Common myeloid progenitor, CD34-positive (primary cell): ENCODE measurements at regions of chr19 and their contacts with region 1.

Region 1: DNA sequence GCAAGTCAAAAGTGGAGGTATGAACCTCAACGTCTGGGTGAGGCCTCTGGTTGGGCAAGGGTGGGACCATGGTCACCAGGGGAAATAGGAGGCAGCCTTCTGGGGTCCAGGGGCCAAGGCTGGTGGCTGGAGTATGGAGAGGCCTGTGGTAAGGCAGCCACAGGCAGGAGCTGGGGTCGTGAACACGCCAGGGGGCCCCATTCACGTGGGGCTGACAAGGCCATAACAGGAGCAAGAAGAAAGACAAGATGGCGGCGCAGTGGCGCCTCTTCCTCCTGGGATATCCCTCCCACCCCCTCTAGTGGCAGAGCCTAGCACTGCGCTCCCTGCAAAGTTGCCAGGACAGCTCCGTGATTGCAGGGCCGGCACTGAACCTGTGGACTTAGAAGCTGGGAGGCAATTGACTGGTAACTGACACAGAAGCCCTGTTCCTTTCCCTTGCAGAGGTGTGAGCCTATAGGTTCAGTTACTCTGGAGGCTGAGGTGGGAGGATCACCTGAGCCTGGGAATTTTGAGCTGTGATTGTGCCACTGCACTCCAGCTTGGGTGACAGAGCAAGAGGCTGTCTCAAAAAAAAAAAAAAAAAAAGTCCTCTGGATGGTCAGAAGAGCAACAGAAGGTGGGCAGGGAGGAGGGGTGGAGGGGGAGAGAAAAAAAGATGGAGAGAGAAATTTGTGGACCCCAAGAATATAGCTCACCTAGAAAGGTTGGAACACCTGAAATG is 19.7 kb upstream of the EDDM13 start:
- DNase-seq: peak; percentile 85 to 91 (median 90)
- H3K4me3 ChIP-seq: peak overlapping the region in 1 of 7 experiments; percentile 7
- H3K27ac ChIP-seq: no peak overlapping the region
- H3K4me1 ChIP-seq: no peaks in the 10 kb centered on the region
- H3K27me3 ChIP-seq: no peaks in the 10 kb centered on the region

Region 2: DNA sequence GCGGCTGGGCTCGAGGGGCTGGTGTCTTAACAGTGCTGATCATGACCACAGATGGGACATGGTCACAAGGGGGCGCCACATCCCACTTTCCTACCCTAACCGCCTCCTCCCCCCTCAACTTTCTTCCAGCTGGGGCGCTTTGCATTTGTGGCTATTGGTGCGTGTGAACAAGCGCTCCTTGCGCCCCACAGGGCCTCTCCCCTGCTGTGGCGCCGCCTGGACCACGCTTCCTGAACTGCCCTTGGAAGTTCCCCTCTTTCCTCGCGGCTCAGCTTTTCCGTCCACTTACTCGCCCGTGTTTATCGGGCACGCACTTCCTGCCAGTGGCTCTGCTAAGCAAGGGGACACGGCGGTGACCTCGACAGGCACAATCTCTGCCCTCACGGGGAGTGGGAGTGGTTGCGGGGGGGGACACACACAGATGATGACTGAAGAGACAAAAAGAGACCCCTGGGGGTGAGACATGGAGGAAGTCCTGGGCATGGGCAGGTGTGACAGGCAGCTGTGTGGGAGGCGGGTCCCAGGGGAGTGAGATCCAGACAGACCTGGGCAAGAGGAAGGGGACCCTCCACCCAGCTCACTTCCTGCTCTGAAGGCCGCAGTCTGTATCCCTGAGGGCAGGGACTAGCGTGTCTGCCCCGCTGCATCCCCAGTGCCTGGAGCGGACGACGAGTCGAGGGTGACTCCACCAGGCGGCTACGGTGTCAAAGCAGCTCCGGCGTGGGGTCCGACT is 172.0 kb before region 1 on chr19:
- CTCF ChIA-PET with region 1: interaction called, 33 read pairs
- POLR2A ChIA-PET with region 1: no interaction called
- DNase-seq: peak; percentile 77 to 90 (median 89)
- H3K4me3 ChIP-seq: peak overlapping the region; percentile 11 to 63 (median 50)
- H3K27ac ChIP-seq: no peak overlapping the region
- H3K4me1 ChIP-seq: peaks cover 0 to 12% (median 10%) of the 10 kb centered on the region in 4 experiments
- H3K27me3 ChIP-seq: peaks cover 0 to 5% (median 0%) of the 10 kb centered on the region in 5 experiments

Region 3: GRCh38 chr19:56155124-56155687 is 97.7 kb before region 1 on chr19:
- CTCF ChIA-PET with region 1: interaction called, 32 read pairs
- POLR2A ChIA-PET with region 1: no interaction called
- DNase-seq: peak in 2 of 3 donors; percentile 25 to 32
- H3K4me3 ChIP-seq: no peak overlapping the region
- H3K27ac ChIP-seq: no peak overlapping the region
- H3K4me1 ChIP-seq: peaks cover 0 to 13% (median 7%) of the 10 kb centered on the region in 4 experiments
- H3K27me3 ChIP-seq: no peaks in the 10 kb centered on the region

Region 4: DNA sequence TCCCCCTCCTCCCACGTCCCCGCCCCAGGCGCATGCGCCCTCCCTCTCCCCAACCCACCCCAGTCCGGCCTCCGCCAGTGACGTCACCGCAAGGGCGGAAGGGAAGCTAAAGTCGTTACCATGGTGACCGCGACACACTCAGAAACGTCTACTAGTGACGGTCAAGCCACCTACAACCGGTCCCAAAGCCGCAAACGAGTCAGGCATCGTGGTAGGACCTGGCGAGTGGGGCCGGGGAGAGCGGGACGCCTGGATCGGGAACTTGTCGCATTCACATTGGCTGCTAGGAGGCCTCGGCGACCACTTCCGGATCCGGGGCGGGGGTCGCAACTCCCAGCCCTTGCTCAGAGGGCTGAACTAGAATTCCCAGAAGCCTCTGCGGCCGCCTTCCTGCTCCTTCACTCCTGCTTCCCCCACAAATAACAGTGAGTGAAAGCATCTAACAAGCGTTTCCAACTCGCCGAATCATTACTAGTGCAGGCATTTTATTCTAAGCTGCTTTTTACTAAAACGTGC is 61.8 kb after region 1 on chr19 and contains the start of gene ZSCAN5A:
- CTCF ChIA-PET with region 1: interaction called, 21 read pairs
- POLR2A ChIA-PET with region 1: no interaction called
- DNase-seq: peak; percentile 97
- H3K4me3 ChIP-seq: peak within 1 kb of the TSS; percentile 41 to 95 (median 90)
- H3K27ac ChIP-seq: peak within 1 kb of the TSS; percentile 98 to 99
- H3K4me1 ChIP-seq: peaks cover 12 to 43% (median 32%) of the 10 kb centered on the region in 4 experiments
- H3K27me3 ChIP-seq: no peaks in the 10 kb centered on the region

Region 5: GRCh38 chr19:56333505-56333904 is 80.6 kb after region 1 on chr19:
- CTCF ChIA-PET with region 1: interaction called, 130 read pairs
- POLR2A ChIA-PET with region 1: no interaction called
- DNase-seq: peak; percentile 66 to 85 (median 79)
- H3K4me3 ChIP-seq: no peak overlapping the region
- H3K27ac ChIP-seq: no peak overlapping the region
- H3K4me1 ChIP-seq: no peaks in the 10 kb centered on the region
- H3K27me3 ChIP-seq: no peaks in the 10 kb centered on the region

Region 6: DNA sequence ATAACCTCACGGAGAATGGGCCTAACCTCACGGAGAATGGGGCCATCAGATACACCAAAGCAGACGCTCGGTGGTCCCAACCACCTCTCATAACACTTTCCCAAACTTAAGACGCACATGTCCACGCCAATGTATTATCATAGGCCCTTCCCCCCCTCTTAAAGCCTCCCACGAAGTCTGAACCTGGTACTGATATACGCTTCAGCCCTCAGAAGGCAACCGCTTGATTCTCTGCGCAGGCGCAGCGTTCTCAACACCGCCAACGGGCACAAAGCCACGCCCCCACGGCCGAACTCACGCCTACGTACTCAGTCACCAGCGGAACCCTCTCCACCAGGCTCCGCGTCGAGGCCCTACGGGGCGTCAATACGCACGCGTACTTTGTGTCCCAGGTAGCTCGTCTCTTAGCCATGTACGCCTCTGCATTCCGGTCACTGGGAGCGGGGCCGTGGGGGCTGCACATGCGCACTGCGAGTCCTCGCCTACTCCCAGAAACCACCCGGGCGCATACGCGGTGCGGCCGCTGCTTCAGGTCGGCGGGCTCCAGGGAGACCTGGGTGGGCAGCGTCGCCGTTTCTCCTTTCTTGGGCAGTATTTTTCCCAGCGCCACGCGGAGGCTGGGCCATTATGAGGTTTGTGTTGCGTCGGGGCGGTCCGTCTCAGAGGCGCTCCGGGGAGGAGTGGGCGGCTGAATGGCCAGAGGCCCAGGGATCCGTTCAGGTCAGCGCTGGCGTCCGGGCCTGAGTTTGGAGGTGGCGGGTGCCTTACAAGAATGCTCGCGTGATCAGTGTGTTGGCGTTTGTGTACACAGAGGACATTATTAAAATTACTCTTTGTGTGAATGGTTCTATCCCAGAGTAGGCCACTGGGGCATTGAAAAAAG is 115.2 kb after region 1 on chr19:
- CTCF ChIA-PET with region 1: no interaction called
- POLR2A ChIA-PET with region 1: no interaction called
- DNase-seq: peak; percentile 90 to 97 (median 97)
- H3K4me3 ChIP-seq: peak overlapping the region; percentile 54 to 90 (median 77)
- H3K27ac ChIP-seq: peak overlapping the region; percentile 71 to 83
- H3K4me1 ChIP-seq: peaks cover 10 to 16% (median 13%) of the 10 kb centered on the region in 4 experiments
- H3K27me3 ChIP-seq: no peaks in the 10 kb centered on the region

Region 7: GRCh38 chr19:56383826-56384605 is 131.2 kb after region 1 on chr19:
- CTCF ChIA-PET with region 1: no interaction called
- POLR2A ChIA-PET with region 1: no interaction called
- DNase-seq: no peak
- H3K4me3 ChIP-seq: no peak overlapping the region
- H3K27ac ChIP-seq: no peak overlapping the region
- H3K4me1 ChIP-seq: no peaks in the 10 kb centered on the region
- H3K27me3 ChIP-seq: no peaks in the 10 kb centered on the region